HEK293 (cell line): ENCODE measurements at regions of chr19 and their contacts with region 1.

Region 1: GRCh38 chr19:5536337-5536894 is 31.3 kb downstream of the TINCR start:
- H3K4me3 ChIP-seq: peak overlapping the region; percentile 26
- H3K27ac ChIP-seq: no peak overlapping the region
- H3K4me1 ChIP-seq: no peaks in the 10 kb centered on the region; the same call in 1 of the 2 replicates
- CTCF ChIP-seq: no peak

Region 2: GRCh38 chr19:5484398-5485285 is 51.8 kb before region 1 on chr19:
- CTCF ChIA-PET with region 1: no interaction called
- POLR2A ChIA-PET with region 1: no interaction called
- H3K4me3 ChIP-seq: no peak overlapping the region
- H3K27ac ChIP-seq: no peak overlapping the region
- H3K4me1 ChIP-seq: no peaks in the 10 kb centered on the region
- CTCF ChIP-seq: no peak

Region 3: DNA sequence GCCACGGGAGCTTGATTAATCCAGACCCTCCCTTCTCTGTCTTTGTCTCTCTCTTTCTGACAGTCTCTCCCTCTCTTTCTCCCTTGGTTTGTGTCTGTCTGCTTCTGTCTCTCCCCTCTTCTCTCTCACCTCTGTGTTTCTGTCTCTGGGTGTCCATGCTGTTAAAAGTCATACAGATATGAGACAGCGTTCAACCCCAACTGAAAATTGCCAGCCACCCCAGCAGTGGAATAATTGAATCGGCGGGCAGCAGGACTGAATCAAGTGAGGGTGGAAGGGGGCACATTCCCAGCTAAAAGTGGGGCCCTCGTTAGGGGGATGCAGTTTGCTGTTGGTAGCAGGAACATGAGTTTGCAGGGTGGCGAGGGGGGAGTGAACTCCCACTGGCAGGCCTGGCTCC is 12.3 kb before region 1 on chr19:
- CTCF ChIA-PET with region 1: interaction called, 25 read pairs
- POLR2A ChIA-PET with region 1: no interaction called
- H3K4me3 ChIP-seq: no peak overlapping the region
- H3K27ac ChIP-seq: no peak overlapping the region
- H3K4me1 ChIP-seq: no peaks in the 10 kb centered on the region
- CTCF ChIP-seq: no peak

Region 4: GRCh38 chr19:5547881-5548280 is 11.5 kb after region 1 on chr19:
- CTCF ChIA-PET with region 1: interaction called, 18 read pairs
- POLR2A ChIA-PET with region 1: no interaction called
- H3K4me3 ChIP-seq: no peak overlapping the region
- H3K27ac ChIP-seq: no peak overlapping the region
- H3K4me1 ChIP-seq: no peaks in the 10 kb centered on the region
- CTCF ChIP-seq: peak; percentile 71; the same call in 1 of the 2 replicates

Region 5: DNA sequence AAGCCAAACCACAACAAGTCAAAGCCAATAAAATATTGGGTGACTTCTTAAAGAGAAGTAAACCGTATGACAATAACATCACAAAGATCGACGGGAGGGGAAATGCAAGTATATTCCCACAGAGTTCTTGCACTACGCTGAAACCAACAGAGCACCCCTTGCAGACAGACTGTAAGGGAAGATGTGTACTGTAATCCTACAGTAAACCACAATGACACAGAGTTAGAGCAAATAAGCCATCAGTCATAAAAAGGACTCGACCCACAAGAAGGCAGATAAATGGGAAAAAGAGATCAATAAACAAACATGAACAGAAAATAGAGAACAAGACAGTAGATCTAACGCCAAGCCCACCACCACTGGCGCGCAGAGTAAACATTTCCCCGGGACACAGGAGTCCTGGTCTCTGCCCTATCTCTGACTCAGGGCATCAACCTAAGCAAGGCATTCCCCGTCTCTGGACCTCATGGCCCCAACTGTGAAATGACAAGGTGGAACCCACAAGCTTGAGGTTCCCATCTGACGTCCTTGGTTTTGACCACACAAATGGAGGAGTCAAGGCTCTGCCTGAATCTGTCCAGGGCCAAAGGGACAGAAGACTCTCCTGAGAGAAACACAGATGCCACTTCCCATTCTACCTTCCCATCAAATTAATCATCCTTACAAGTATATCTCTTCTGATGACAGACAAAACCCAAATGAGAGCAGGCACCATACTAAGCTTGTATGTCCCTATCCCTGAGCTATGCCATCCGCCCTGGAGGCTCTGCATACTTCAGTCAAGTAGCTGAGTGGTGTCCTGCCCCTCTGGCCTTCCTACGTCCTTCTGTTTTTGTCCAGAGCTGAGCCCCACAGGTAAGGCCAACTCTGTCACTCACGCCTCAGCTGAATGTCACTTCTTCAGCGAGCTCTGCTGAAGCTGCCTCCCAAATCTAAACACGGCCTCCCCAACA is 71.2 kb after region 1 on chr19:
- CTCF ChIA-PET with region 1: no interaction called
- POLR2A ChIA-PET with region 1: no interaction called
- H3K4me3 ChIP-seq: no peak overlapping the region
- H3K27ac ChIP-seq: no peak overlapping the region
- H3K4me1 ChIP-seq: no peaks in the 10 kb centered on the region
- CTCF ChIP-seq: no peak